ENCODE measurements at regions of chr2 and their contacts with region 1.

Region 1: GRCh38 chr2:46394649-46395510 is 84.5 kb upstream of the TMEM247 start:
- DNase-seq: no peak
- ATAC-seq: no peak

Region 2: DNA sequence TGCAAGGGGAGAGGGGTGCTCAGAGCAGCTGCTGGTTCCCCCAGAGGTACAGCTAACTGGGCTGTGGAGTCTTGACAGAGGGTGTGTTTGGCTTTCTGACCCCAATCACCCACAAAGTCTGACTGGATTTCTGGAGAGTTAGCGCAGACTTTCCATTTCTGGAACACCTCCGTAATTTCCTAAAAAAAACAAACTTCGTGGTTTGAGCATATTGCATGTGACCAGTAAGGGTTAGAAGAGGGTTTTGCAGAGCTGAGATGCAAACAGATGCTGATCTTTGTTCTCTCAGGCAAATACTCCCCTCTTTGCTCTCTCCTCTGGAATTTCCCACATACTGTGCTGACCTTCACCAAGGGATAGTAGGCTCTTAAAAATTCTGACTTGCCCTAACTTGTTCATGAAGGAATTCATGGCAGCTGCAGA is 40.0 kb after region 1 on chr2:
- intact Hi-C with region 1: loop called (anchors 5 kb)
- DNase-seq: no peak
- ATAC-seq: no peak